ENCODE measurements at regions of chr17 and their contacts with region 1.

Region 1: DNA sequence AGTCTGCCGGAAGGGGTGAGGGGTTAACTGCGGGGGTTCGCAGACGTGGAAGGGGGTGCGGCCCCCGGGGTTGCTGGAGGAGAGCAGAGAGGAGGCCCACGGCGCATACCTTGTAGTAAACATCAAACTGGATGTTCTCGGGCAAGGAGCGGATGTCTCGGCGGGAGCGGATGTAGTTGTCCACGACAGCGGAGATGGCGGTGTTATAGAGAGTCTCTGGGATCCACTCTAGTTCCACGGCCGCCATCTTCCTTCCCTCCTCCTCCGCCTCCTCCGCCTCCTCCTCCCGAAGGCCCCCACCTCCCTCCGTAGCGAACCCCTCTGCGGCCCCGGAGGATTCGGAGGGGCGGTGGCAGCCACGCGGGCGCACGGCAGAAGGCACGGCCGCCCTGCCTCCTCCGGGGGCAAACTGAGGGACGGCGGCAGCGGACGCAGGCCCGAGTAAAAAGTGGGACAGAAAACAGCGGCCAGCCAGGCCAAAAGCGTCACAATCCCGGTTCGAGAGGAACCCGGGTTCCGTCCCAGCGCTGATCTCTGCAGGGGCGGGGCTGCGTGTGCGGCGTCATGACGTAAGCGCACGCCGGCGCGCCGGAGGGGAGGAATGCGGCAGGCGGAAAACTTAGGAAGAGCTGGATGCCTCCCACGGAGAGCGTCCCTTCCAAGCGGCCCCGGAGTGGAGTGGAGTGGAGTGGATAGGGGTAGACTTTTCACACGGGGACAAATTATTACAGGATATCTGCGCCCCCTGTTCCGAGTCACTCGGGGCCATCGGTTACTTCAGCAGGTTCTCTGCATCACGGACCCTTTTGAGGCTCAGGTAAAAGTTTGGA is at the start of gene APPBP2:
- DNase-seq: peak; percentile 94
- H3K4me3 Mint-ChIP-seq: peak within 1 kb of the TSS; percentile 97
- H3K27ac Mint-ChIP-seq: peak within 1 kb of the TSS; percentile 97
- H3K4me1 Mint-ChIP-seq: peaks cover 37% of the 10 kb centered on the region
- H3K27me3 Mint-ChIP-seq: peaks cover 6% of the 10 kb centered on the region
- total RNA-seq, gene APPBP2: 21.4 and 25.1 TPM in 2 replicates

Region 2: DNA sequence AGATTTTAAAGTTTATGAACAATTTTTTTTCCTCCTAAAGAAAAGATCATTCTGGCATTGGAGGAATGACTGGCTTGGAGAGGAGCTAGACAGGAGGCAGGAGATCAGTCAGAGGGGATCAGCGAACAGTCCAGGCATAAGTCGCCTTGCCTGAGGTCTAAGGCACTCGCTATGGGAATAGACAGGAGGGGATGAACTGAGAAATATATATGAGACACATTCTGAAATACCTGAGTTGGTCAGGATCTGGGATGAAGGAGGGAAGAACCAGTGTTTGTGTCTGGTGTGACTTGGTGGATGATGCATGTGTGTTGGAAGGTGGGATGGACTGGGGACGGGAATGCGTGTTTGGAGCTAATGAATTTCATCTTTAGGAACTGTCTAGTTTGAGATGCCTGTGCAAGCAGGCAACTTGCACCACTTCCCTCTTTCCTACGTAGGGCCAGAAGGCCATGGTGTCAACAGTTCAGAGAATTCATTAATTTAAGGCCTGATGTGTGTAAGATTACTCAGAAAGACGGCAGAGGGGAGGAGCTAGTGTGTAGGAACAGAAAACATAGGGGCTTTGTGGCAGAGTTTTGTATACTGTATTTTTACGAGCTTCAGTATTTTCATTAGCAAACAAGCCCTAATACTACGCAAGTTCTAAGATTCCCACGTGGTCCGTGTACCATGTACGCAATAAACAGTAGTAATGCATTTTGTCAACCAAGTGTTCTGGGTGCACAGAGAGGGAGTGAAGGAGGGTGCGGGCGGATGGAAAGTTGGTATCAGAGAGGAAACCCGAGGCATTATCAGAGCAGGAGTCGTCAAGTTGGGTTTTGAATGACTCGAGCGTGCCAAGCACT is 448.0 kb before region 1 on chr17:
- intact Hi-C with region 1: loop called (anchors 5 kb)
- DNase-seq: no peak
- H3K4me3 Mint-ChIP-seq: peak overlapping the region; percentile 87
- H3K27ac Mint-ChIP-seq: peak overlapping the region; percentile 96
- H3K4me1 Mint-ChIP-seq: peaks cover 27% of the 10 kb centered on the region
- H3K27me3 Mint-ChIP-seq: no peaks in the 10 kb centered on the region

Region 3: GRCh38 chr17:60333628-60334031 is 192.3 kb before region 1 on chr17:
- intact Hi-C with region 1: no loop called
- DNase-seq: no peak
- H3K4me3 Mint-ChIP-seq: no peak overlapping the region
- H3K27ac Mint-ChIP-seq: no peak overlapping the region
- H3K4me1 Mint-ChIP-seq: peaks cover 9% of the 10 kb centered on the region
- H3K27me3 Mint-ChIP-seq: no peaks in the 10 kb centered on the region

Region 4: GRCh38 chr17:60599620-60600489 is 74.0 kb after region 1 on chr17 and contains the start of gene PPM1D:
- intact Hi-C with region 1: loop called (anchors 2 kb)
- DNase-seq: peak; percentile 99
- H3K4me3 Mint-ChIP-seq: peak within 1 kb of the TSS; percentile 95
- H3K27ac Mint-ChIP-seq: peak within 1 kb of the TSS; percentile 98
- H3K4me1 Mint-ChIP-seq: peaks cover 37% of the 10 kb centered on the region
- H3K27me3 Mint-ChIP-seq: no peaks in the 10 kb centered on the region
- total RNA-seq, gene PPM1D: 17.1 and 17.9 TPM in 2 replicates

Region 5: DNA sequence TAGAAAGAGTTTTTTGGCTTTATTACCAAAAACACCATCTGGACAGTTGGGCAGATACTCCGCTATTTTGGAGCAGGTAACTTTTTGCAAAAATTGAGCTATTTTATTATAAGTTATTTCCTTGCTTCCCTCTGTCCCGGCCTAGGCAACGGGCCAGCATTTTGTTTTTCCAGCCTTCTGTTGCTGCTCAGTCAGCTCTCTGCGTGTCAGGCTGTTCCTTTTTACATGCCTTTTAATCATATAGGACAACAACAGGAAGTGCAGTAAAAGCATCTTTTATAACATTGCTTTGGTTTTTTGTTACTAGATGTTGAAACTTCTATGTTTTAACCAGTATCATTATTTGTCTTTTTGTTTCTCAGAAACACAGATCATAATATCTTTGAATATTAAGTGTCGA is 104.5 kb after region 1 on chr17:
- intact Hi-C with region 1: no loop called
- DNase-seq: no peak
- H3K4me3 Mint-ChIP-seq: no peak overlapping the region
- H3K27ac Mint-ChIP-seq: no peak overlapping the region
- H3K4me1 Mint-ChIP-seq: peaks cover 11% of the 10 kb centered on the region
- H3K27me3 Mint-ChIP-seq: no peaks in the 10 kb centered on the region

Region 6: GRCh38 chr17:60641810-60642220 is 115.9 kb after region 1 on chr17:
- intact Hi-C with region 1: loop called (anchors 5 kb)
- DNase-seq: peak; percentile 87
- H3K4me3 Mint-ChIP-seq: no peak overlapping the region
- H3K27ac Mint-ChIP-seq: no peak overlapping the region
- H3K4me1 Mint-ChIP-seq: peaks cover 11% of the 10 kb centered on the region
- H3K27me3 Mint-ChIP-seq: no peaks in the 10 kb centered on the region

Region 7: DNA sequence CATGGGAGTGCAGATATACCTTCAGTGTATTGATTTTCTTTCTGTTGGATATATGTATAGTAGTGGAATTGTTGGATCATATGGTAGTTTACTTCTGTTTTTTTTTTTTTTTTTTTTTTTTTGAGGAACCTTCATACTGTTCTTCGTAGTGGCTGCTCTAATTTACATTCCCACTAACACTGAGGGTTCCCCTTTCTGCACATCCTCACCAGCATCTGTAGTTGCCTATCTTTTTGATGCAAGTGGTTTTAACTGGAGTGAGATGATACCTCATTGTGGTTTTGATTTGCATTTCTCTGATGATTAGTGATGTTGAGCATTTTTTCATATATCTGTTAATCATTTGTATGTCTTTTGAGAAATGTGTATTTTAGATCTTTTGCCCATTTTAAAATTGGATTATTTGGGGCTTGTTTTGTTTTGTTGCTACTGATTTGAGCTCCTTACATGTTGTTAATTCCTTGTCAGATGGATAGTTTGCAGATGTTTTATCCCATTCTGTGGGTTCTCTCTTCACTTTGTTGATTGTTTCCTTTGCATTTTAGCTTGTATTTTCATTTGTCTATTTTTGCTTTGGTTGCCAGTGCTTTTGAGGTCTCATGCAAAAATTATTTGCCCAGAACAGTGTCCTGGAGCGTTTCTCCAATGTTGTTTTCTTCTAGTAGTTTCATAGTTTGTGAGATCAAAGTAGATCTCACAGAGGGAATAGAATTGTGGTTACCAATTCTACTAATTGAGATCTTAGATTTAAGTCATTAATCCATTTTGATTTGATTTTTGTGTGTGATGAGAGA is 126.8 kb after region 1 on chr17:
- intact Hi-C with region 1: no loop called
- DNase-seq: no peak
- H3K4me3 Mint-ChIP-seq: no peak overlapping the region
- H3K27ac Mint-ChIP-seq: no peak overlapping the region
- H3K4me1 Mint-ChIP-seq: peaks cover 17% of the 10 kb centered on the region
- H3K27me3 Mint-ChIP-seq: no peaks in the 10 kb centered on the region

Region 8: DNA sequence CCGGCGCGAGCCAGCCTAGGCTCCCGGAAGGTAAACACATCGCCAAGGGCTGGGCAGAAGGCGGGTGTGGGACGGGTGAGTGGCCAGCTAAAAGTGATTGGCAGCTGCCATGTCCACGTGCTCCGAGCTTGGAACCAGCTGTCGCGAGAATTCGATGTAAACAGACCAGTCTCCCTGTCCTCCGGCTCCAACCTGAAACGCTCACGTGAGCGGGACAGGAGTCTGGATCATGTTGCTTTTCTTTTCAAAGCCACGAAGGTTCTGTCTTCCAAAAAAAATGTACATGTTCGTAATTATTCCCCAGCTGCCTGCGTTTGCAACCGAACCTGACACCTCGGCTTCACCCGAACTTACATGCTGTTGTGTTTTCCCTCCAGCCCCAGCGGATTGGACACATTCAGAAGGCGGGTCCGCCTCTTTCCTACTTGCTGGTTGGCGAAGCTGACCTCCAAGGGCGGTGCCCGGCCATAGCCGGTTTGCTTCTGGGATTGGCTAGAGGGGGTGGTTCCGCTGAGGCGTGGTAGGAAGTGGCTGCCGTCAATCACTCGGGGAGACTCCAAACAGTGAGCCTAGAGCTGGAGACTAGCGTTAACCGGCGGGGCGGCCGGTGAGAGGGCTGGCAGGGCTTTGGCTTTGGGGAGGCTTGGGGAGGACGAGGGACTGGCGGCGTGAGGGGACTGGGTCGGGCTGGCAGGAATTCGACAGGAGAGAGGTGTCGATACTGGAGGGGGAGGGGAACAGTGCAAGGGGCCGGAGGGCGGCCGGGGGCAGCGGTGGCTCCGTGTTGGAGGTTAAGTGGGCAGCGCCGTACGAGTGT is 151.6 kb after region 1 on chr17 and contains the start of gene BCAS3:
- intact Hi-C with region 1: loop called (anchors 2 kb)
- DNase-seq: peak; percentile 99
- H3K4me3 Mint-ChIP-seq: peak within 1 kb of the TSS; percentile 100
- H3K27ac Mint-ChIP-seq: peak within 1 kb of the TSS; percentile 74
- H3K4me1 Mint-ChIP-seq: peaks cover 19% of the 10 kb centered on the region
- H3K27me3 Mint-ChIP-seq: no peaks in the 10 kb centered on the region
- total RNA-seq, gene BCAS3: 9.5 and 10.2 TPM in 2 replicates